Calu3 (cell line): ENCODE measurements at regions of chrX and their contacts with region 1.

Region 1: GRCh38 chrX:70664726-70665125 is 220.1 kb downstream of the DLG3 start:
- DNase-seq: peak; percentile 3
- H3K4me3 Mint-ChIP-seq: no peak overlapping the region
- H3K27ac Mint-ChIP-seq: no peak overlapping the region
- H3K4me1 Mint-ChIP-seq: no peaks in the 10 kb centered on the region
- H3K27me3 Mint-ChIP-seq: peaks cover 33% of the 10 kb centered on the region
- CTCF ChIP-seq: no peak

Region 2: DNA sequence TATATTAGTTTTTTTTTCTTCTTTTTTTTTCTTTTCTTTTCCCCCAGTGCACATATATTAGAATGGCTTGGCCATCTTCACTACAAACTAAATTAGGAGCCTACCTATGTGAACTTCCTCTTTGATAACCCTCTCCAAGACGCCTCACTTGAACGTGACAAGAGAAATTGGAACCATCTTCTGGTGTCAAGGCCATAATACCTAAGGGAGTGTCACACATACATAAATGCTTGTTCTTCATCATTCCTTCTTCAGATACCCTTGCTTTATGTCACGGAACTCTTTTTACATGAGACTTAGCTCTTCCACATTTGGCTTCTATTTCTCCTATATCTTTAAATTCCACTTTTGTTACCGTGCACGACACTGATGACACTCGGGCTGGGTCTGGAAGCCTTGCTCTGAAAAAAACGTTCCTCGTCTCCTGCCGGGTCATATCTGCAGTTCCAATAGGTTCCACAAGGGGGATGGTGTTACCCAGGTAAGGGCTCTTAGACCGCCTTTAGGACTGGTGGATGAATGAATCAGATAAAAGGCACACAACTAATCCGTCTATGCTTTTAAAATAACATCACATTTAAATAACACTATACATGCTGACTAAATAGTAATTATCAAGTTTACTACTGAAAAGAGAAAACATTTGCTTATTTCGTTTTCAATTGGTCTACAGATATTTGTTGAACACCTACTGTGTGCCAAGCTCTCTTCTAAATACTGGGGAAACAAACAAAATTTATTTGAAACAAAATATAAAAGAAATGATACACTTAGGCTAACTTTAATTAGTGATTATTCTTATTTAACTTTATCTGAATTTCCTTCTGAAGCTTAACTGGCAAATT is 467.5 kb before region 1 on chrX:
- CTCF ChIA-PET with region 1: no interaction called
- intact Hi-C with region 1: loop called (anchors 10 kb)
- DNase-seq: peak; percentile 75
- H3K4me3 Mint-ChIP-seq: no peak overlapping the region
- H3K27ac Mint-ChIP-seq: no peak overlapping the region
- H3K4me1 Mint-ChIP-seq: peaks cover 8% of the 10 kb centered on the region
- H3K27me3 Mint-ChIP-seq: peaks cover 27% of the 10 kb centered on the region
- CTCF ChIP-seq: peak; percentile 46

Region 3: GRCh38 chrX:70338290-70338689 is 326.4 kb before region 1 on chrX:
- CTCF ChIA-PET with region 1: no interaction called
- intact Hi-C with region 1: no loop called
- DNase-seq: no peak
- H3K4me3 Mint-ChIP-seq: no peak overlapping the region
- H3K27ac Mint-ChIP-seq: no peak overlapping the region
- H3K4me1 Mint-ChIP-seq: no peaks in the 10 kb centered on the region
- H3K27me3 Mint-ChIP-seq: no peaks in the 10 kb centered on the region
- CTCF ChIP-seq: no peak

Region 4: DNA sequence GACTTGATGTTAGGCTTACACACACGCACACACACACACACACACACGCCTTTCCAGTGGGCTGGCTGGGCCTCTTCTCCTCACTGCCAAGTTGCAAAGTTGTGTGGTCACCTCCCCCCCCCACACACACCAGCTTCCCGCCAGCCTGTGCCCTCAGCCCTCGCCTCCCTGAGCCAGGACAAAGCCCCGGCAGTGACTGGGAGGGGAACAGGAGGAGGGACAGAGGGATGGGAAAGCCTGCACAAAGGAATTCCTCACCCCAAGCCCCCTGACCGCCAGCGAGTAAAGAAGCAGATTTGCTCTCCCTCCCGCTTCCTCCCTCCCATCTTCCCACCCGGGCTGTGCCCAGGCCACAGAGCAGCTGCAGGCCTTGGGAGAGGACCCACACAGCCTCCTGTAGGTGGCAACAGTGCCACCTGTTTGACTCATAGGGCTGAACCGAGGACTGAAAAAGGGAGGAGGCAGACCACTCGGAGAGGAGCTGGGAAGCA is 241.8 kb before region 1 on chrX and contains the start of gene GDPD2:
- CTCF ChIA-PET with region 1: interaction called, 26 read pairs
- intact Hi-C with region 1: loop called (anchors 2 kb)
- DNase-seq: peak; percentile 60
- H3K4me3 Mint-ChIP-seq: peak within 1 kb of the TSS; percentile 41
- H3K27ac Mint-ChIP-seq: no peak within 1 kb of the TSS
- H3K4me1 Mint-ChIP-seq: peaks cover 5% of the 10 kb centered on the region
- H3K27me3 Mint-ChIP-seq: no peaks in the 10 kb centered on the region
- CTCF ChIP-seq: peak; percentile 33
- total RNA-seq, gene GDPD2: not detected in 2 replicates

Region 5: GRCh38 chrX:70454441-70455365 is 210.0 kb before region 1 on chrX:
- CTCF ChIA-PET with region 1: interaction called, 6 read pairs
- intact Hi-C with region 1: loop called (anchors 5 kb)
- DNase-seq: peak; percentile 93
- H3K4me3 Mint-ChIP-seq: peak overlapping the region; percentile 99
- H3K27ac Mint-ChIP-seq: peak overlapping the region; percentile 97
- H3K4me1 Mint-ChIP-seq: peaks cover 27% of the 10 kb centered on the region
- H3K27me3 Mint-ChIP-seq: no peaks in the 10 kb centered on the region
- CTCF ChIP-seq: peak; percentile 89